Activated CD4-positive, alpha-beta memory T cell treated with anti-CD3 and anti-CD28 coated beads for 36 hours (primary cell): ENCODE measurements at regions of chr18 and their contacts with region 1.

Region 1: GRCh38 chr18:63367053-63367953 is at the start of gene KDSR:
- DNase-seq: peak; percentile 89
- H3K4me3 Mint-ChIP-seq: peak within 1 kb of the TSS; percentile 90
- H3K27ac Mint-ChIP-seq: peak within 1 kb of the TSS; percentile 86
- H3K4me1 Mint-ChIP-seq: peaks cover 29% of the 10 kb centered on the region
- H3K27me3 Mint-ChIP-seq: no peaks in the 10 kb centered on the region
- total RNA-seq, gene KDSR: 72.8 to 77.2 TPM

Region 2: DNA sequence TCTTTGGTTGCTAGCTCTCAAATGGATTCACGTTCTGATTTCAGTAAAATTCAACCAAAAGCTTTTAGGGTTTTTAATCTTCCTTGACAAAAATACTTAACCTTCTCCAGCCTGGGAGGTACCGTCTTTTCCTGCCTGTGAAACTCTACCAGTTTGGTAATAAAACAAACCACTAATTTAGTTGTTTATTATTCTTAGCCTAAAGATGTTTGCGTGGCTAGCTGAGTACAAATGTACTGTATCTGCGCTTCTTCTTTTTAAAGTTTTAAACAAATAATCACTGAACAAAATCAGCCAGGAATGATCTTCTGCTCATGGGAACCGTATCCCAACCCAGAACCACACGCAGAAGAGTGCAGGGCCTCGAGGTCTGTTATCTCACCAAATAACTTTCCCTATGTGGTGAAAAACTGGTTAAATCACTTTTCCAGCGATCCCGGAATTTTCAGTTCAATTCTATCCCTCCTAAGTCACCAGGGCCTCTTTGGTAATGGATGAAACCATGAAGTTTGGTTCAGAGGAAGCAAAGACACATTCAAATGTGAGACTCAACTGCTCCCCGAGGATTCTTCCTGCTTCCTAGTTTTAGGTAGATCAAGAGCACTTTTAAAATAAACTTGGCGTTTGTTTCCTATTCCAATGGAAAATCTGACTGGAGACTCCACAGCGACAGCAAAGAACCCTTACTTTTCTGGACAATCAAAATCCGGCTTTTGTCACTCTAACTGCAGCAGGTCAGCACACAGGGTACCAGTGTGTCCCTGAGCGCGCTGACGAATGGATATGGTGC is 83.8 kb before region 1 on chr18:
- CTCF ChIA-PET with region 1: no interaction called
- POLR2A ChIA-PET with region 1: no interaction called
- intact Hi-C with region 1: no loop called
- DNase-seq: no peak
- H3K4me3 Mint-ChIP-seq: no peak overlapping the region
- H3K27ac Mint-ChIP-seq: no peak overlapping the region
- H3K4me1 Mint-ChIP-seq: peaks cover 58% of the 10 kb centered on the region
- H3K27me3 Mint-ChIP-seq: no peaks in the 10 kb centered on the region

Region 3: DNA sequence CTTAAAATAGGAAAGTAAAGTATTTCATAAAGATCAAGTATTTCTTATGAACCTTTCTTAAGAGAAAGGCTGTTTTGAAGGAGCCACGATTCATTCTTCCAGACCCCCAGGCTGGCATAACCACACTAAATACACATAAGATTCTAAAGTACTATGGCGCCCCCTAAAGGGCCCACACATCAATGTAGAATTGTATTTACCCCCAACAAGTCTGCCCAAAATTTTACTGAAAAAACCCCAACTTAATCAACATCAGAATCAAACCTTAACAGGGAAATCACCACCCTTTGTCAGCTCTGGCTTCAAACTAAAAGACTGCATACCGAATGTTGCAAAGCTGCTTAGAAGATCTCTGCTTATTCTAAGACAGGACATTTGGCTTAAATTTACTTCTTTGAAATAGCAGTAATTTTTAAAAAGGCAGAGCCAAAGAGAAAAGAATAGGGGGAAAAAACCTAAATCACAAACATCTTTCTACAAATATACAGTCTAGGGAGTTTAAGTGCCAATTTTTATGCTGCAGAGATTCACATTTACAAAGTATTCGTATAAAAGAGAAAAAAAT is 27.3 kb before region 1 on chr18:
- CTCF ChIA-PET with region 1: interaction called, 14 read pairs
- POLR2A ChIA-PET with region 1: no interaction called
- intact Hi-C with region 1: loop called (anchors 2 kb)
- DNase-seq: peak; percentile 37
- H3K4me3 Mint-ChIP-seq: no peak overlapping the region
- H3K27ac Mint-ChIP-seq: no peak overlapping the region
- H3K4me1 Mint-ChIP-seq: peaks cover 12% of the 10 kb centered on the region
- H3K27me3 Mint-ChIP-seq: no peaks in the 10 kb centered on the region

Region 4: DNA sequence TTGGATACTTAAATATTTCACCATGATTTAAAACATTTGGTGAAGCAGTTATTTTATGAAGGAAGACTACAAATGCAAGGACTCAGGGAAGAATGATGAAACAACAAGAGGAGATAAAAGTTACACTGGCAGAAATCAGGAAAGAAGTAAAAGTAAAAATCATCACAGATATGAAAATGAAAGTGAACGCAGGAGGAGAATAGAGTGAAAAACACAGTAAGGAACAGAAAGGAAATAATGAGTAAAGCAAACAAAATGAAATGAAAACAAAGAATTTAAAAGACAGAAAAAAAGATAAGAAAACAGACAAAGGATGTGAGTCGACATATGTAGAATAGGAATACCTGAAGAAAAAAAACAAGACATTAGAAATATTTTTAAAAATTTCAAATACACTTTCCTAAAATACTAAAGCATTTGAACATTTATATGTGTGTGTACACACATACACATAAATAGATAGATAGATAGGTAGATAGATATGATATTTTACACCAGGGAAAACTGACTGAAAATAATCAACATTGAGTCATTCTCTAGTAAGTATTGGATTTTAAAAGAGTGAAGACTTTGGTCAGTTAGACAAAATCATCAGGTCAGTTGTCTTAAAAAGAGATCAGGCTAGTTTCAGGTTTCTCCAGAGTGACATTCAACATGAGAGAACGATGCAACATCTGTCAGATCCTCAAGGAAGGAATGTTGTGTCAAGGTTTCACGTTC is 11.8 kb after region 1 on chr18:
- CTCF ChIA-PET with region 1: interaction called, 3 read pairs
- POLR2A ChIA-PET with region 1: interaction called, 3 read pairs
- intact Hi-C with region 1: loop called (anchors 1 kb)
- DNase-seq: no peak
- H3K4me3 Mint-ChIP-seq: peak overlapping the region; percentile 23
- H3K27ac Mint-ChIP-seq: no peak overlapping the region
- H3K4me1 Mint-ChIP-seq: peaks cover 21% of the 10 kb centered on the region
- H3K27me3 Mint-ChIP-seq: no peaks in the 10 kb centered on the region

Region 5: GRCh38 chr18:63402246-63403162 is 35.2 kb after region 1 on chr18:
- CTCF ChIA-PET with region 1: no interaction called
- POLR2A ChIA-PET with region 1: interaction called, 3 read pairs
- intact Hi-C with region 1: loop called (anchors 1 kb)
- DNase-seq: no peak
- H3K4me3 Mint-ChIP-seq: no peak overlapping the region
- H3K27ac Mint-ChIP-seq: peak overlapping the region; percentile 57
- H3K4me1 Mint-ChIP-seq: peaks cover 26% of the 10 kb centered on the region
- H3K27me3 Mint-ChIP-seq: no peaks in the 10 kb centered on the region

Region 6: GRCh38 chr18:63410792-63411191 is 43.5 kb after region 1 on chr18:
- CTCF ChIA-PET with region 1: interaction called, 3 read pairs
- POLR2A ChIA-PET with region 1: interaction called, 6 read pairs
- intact Hi-C with region 1: loop called (anchors 1 kb)
- DNase-seq: no peak
- H3K4me3 Mint-ChIP-seq: no peak overlapping the region
- H3K27ac Mint-ChIP-seq: peak overlapping the region; percentile 15
- H3K4me1 Mint-ChIP-seq: peaks cover 46% of the 10 kb centered on the region
- H3K27me3 Mint-ChIP-seq: no peaks in the 10 kb centered on the region